ENCODE measurements at regions of chr4 and their contacts with region 1.

Region 1: DNA sequence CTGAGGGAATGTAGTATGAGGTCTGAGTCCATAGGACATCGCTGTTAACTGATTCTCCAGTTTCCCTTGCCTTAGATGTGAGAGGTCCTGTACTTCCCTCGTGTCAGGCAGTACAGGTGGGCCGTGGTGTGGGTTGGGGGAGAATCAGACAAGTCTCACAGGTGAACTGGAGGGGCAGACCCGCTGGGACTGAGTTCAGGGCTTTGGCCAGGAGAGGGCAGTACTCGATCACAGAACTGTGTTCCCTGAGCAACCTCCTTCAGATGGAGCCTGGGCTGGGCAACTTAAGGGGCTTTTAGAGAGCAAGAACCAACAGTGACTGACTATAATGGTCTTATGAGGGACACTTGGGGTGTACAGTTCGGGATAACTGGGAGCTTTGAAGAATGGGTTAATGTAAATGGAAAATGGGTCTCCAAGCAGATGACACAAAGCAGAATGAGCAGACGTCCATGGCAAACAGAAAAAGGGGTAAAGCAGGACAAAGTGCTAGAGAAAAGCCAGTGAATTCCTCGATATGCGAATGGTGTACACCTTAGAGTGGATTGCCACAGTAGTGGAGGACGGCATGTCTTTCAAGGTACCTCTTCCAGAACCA is 83.6 kb downstream of the CCNG2 start:
- DNase-seq: peak; percentile 53
- H3K4me3 ChIP-seq: no peak overlapping the region; a peak in 1 of 4 replicates
- H3K27ac ChIP-seq: no peak overlapping the region
- H3K4me1 ChIP-seq: no peaks in the 10 kb centered on the region
- H3K27me3 ChIP-seq: peaks cover 26% of the 10 kb centered on the region; the same call in 1 of the 2 replicates
- CTCF ChIP-seq: peak; percentile 88
- EP300 ChIP-seq: no peak
- RAD21 ChIP-seq: peak; percentile 77

Region 2: DNA sequence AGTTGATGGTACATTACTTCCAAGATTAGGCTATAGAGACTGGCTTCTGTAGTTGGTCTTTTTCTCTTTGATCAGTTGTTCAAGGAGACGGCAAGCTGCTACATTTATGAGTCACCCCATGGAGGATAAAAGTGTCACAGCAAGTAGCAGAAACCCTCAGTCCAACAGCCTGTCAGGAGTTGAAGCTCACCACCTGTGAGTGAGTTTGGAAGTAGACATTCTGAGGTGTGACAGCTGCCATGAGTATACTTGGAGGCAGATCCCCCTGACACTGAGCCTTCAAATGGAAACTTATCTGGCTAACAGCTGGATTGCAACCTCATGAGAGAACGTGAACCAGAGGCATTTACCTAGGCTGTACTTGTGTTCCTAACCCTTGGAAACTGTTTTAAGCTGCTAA is 15.5 kb before region 1 on chr4:
- CTCF ChIA-PET with region 1: interaction called, 46 read pairs
- POLR2A ChIA-PET with region 1: no interaction called
- DNase-seq: no peak
- H3K4me3 ChIP-seq: no peak overlapping the region
- H3K27ac ChIP-seq: no peak overlapping the region
- H3K4me1 ChIP-seq: no peaks in the 10 kb centered on the region
- H3K27me3 ChIP-seq: peaks cover 12% of the 10 kb centered on the region; the same call in 1 of the 2 replicates
- CTCF ChIP-seq: no peak
- EP300 ChIP-seq: no peak
- RAD21 ChIP-seq: no peak

Region 3: DNA sequence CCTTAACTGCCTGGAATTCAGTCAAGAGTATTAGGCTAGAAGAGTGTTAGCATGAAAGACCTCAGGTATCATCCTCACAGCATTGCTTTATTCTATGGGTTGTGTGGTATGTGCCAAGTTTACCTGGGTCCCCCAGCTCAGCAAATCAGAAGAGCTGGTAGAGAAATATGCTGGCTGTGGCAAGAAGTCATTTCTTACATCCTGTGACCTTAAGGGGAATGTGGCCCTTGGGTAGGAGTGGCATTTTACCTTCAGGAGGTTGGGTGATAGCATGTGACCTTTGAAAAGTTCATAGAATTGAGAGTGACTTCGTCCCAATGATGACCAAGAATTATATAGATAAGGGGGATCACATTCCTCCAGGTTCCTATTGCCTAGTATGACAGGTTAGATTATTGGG is 14.4 kb after region 1 on chr4:
- CTCF ChIA-PET with region 1: interaction called, 29 read pairs
- POLR2A ChIA-PET with region 1: no interaction called
- DNase-seq: no peak
- H3K4me3 ChIP-seq: no peak overlapping the region
- H3K27ac ChIP-seq: no peak overlapping the region
- H3K4me1 ChIP-seq: no peaks in the 10 kb centered on the region
- H3K27me3 ChIP-seq: 0 out of 2 replicates have a peak, but pooled peaks cover 7% of the 10 kb centered on the region
- CTCF ChIP-seq: no peak
- EP300 ChIP-seq: no peak
- RAD21 ChIP-seq: no peak

Region 4: GRCh38 chr4:77269161-77269904 is 28.8 kb after region 1 on chr4:
- CTCF ChIA-PET with region 1: interaction called, 12 read pairs
- POLR2A ChIA-PET with region 1: no interaction called
- DNase-seq: no peak
- H3K4me3 ChIP-seq: no peak overlapping the region
- H3K27ac ChIP-seq: no peak overlapping the region
- H3K4me1 ChIP-seq: no peaks in the 10 kb centered on the region
- H3K27me3 ChIP-seq: no peaks in the 10 kb centered on the region
- CTCF ChIP-seq: no peak
- EP300 ChIP-seq: no peak
- RAD21 ChIP-seq: no peak

Region 5: GRCh38 chr4:77286906-77287305 is 46.3 kb after region 1 on chr4:
- CTCF ChIA-PET with region 1: no interaction called
- POLR2A ChIA-PET with region 1: no interaction called
- DNase-seq: no peak
- H3K4me3 ChIP-seq: no peak overlapping the region
- H3K27ac ChIP-seq: no peak overlapping the region
- H3K4me1 ChIP-seq: no peaks in the 10 kb centered on the region
- H3K27me3 ChIP-seq: no peaks in the 10 kb centered on the region
- CTCF ChIP-seq: no peak
- EP300 ChIP-seq: no peak
- RAD21 ChIP-seq: no peak

Region 6: GRCh38 chr4:77358315-77358928 is 117.9 kb after region 1 on chr4:
- CTCF ChIA-PET with region 1: interaction called, 47 read pairs
- POLR2A ChIA-PET with region 1: no interaction called
- DNase-seq: peak; percentile 42
- H3K4me3 ChIP-seq: no peak overlapping the region
- H3K27ac ChIP-seq: no peak overlapping the region
- H3K4me1 ChIP-seq: no peaks in the 10 kb centered on the region
- H3K27me3 ChIP-seq: peaks cover 13% of the 10 kb centered on the region; the same call in 1 of the 2 replicates
- CTCF ChIP-seq: peak; percentile 67
- EP300 ChIP-seq: no peak
- RAD21 ChIP-seq: peak; percentile 62

Region 7: GRCh38 chr4:77600521-77601451 is 360.2 kb after region 1 on chr4:
- CTCF ChIA-PET with region 1: interaction called, 10 read pairs
- POLR2A ChIA-PET with region 1: no interaction called
- DNase-seq: peak; percentile 38
- H3K4me3 ChIP-seq: no peak overlapping the region
- H3K27ac ChIP-seq: no peak overlapping the region
- H3K4me1 ChIP-seq: no peaks in the 10 kb centered on the region
- H3K27me3 ChIP-seq: peaks cover 36% of the 10 kb centered on the region
- CTCF ChIP-seq: peak; percentile 89
- EP300 ChIP-seq: no peak
- RAD21 ChIP-seq: peak; percentile 63

Measured in SK-N-SH (cell line).